Head of caudate nucleus (tissue), 42 donors: ENCODE measurements at regions of chr5 and their contacts with region 1.

Region 1: DNA sequence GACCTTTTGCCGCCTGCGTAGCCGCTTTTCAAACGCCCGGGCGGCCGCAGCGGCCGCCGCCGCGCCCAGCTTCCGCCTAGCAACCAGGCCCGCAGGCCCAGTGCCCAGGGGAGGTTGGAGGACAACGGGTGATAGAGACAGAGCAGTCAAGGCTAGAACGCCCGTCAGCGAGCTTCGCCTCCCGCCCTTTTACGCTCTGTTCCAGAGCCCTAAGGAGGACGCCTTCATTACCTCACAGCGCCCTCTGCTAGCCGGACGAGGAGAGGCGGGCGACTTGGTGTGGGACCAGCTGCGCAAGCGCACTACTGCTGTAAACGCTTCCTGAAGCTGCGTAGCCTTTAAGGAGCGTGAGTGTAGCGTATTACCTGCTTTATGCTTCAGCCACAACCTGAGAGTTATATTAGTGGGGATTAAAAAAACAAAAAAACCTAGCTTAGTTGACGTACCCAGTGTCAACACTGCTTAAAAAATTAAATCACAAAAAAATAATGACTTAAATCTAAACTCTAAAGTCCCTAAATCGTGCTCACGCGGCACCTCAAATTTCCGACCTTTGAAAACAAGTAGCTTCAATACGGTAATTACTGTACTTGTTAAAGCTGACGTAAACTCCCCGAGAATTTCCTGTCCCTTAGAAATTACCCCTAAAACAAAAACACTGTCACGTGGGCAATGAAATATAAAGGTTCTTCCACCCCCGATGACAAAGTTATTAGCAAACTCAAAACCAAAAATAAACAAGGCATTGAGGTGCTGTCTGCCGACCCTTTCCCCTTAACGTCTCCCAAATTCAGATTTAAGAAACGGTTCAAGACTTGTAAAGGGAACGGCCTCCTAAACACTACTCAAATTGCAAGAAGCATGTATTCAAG is at the start of gene CEP120:
- DNase-seq: peak; percentile 96 to 99 (median 98)

Region 2: DNA sequence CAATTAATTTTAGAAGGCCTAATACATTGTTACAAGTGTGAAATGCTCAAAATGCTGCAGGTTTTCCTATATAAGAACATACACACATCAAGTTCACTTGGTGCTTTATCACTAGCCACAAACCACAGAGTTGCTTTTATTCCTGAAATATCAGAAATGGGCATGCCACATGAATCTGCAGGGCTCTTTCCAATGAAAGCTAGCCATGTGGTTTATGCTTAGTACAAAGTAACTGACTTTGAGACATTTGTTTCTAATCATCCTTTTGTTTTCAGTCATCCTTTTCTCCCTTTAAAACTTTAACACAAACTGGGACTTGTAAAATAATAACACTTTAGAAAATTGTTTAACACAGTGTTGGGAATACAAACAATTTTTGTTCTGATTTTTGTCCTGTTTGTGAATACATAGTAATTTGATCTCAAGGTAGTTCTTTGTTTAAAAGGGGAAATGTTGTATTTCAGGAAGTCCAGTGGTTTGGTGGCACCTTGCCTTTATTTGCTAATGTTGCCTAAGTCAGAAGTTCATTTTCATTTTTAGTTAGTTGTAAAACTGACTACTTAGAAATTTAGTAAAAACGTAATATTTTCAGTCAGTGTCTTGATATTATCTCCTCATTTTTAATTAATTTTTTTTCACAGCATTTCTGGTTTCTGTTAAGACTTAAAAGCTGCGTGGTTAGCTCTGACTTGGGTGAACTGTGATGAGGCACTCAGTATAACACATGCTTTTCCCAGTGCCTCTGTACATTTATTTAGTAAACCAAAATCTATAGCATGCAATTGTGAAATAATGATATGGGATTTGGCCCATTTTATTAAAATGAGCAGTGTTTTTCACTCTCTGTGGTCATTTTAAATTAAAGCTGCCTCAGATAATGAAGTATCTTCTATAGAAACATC is 315.9 kb before region 1 on chr5:
- intact Hi-C with region 1: no loop called
- DNase-seq: no peak

Region 3: DNA sequence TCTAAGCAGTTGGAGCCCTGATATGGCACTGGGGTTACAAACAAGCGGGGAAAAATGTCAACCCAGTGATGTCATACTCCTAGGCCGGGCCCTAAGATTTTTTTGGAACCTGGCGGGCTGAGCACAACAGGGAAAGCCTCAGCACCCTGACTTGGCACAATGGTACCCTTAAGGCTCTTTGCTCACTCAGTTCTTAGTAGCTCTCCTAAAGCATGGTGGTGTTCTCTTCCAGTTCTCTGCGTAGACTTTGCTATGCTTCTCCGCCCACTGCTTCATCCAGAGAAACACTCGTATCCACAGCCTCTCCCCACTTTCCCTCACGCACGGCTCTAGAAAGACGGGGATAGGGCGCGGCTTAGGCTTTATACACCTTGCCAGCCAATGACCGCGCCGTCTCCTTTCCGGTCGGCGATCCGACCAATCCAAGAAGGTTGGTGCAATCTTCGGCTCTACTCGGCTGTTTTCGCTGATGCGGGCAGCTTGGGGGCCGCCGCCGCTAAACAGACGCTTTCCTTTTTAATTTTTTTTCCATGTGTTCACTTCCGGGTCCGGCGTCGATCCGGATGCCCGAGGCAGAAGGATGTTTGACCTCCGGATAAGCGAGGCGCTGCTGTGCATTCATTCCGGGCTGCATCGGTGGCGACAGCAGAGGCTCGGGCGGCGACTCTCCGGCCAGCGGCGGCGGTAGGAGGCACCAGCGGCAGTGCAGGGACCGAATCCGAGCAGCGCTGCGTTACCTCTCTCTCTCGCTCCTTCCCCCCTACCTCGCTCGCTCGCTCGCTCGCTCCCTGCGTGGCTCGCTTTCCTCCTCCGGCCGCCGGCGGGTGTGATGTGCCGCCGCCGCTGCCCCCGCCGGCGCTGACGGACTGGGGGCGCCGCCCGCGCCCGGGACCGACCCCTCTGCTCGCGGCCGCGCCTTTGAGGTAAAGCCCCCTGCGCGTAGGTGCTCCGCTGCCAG is 88.4 kb after region 1 on chr5 and contains the start of gene CSNK1G3:
- intact Hi-C with region 1: loop called (anchors 2 kb)
- DNase-seq: peak; percentile 90 to 98 (median 96)

Region 4: GRCh38 chr5:123610665-123611405 is 187.3 kb after region 1 on chr5:
- intact Hi-C with region 1: loop called (anchors 5 kb)
- DNase-seq: peak in 14 of 42 donors; percentile 10 to 72 (median 36)

Region 5: GRCh38 chr5:123752552-123753179 is 329.2 kb after region 1 on chr5:
- intact Hi-C with region 1: no loop called
- DNase-seq: peak in 7 of 42 donors; percentile 2 to 65 (median 21)